ENCODE measurements at regions of chr19 and their contacts with region 1.

Region 1: DNA sequence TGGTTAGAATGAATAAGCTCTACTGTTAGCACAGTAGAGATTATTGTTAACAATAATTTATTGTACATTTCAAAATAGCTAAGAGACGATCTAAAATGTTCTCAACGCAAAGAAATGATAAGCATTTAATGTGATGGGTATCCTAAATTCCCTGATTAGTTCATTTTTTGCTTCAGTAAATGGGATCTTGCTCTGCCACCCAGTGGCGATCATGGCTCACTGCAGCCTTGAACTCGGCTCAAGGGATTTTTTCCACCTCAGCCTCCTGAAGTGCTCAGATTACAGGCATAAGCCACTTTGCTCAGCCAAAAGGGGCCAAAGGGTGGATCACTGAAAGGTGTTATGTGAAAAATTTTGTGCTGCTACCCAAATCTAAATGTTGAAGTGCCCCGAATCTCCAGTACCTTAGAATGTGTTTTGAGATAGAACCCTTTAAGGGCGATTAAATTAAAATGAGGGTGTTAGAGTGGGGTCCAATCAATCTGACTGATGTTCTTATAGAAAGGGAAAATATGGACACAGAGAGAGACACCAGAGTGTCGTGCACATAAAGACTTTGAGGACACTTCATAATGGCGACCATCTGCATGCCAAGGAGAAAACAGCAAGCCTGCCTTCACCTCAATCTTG is 31.5 kb upstream of the ZNF766 start:
- DNase-seq: peak; percentile 44
- ATAC-seq: peak; percentile 71
- H3K4me3 ChIP-seq: no peak overlapping the region
- H3K27ac ChIP-seq: no peak overlapping the region
- H3K4me1 ChIP-seq: no peaks in the 10 kb centered on the region
- H3K27me3 ChIP-seq: no peaks in the 10 kb centered on the region
- CTCF ChIP-seq: peak; percentile 57 to 82 (median 82); a peak in 5 of 6 replicates
- POLR2A ChIP-seq: no peak
- RAD21 ChIP-seq: peak; percentile 79

Region 2: GRCh38 chr19:51784922-51785690 is 452.8 kb before region 1 on chr19:
- CTCF ChIA-PET with region 1: no interaction called
- POLR2A ChIA-PET with region 1: no interaction called
- RAD21 ChIA-PET with region 1: no interaction called
- intact Hi-C with region 1: loop called (anchors 10 kb)
- DNase-seq: no peak
- ATAC-seq: no peak
- H3K4me3 ChIP-seq: no peak overlapping the region
- H3K27ac ChIP-seq: no peak overlapping the region
- H3K4me1 ChIP-seq: no peaks in the 10 kb centered on the region
- H3K27me3 ChIP-seq: no peaks in the 10 kb centered on the region
- CTCF ChIP-seq: no peak
- POLR2A ChIP-seq: no peak
- RAD21 ChIP-seq: no peak

Region 3: GRCh38 chr19:52120286-52120685 is 117.6 kb before region 1 on chr19:
- CTCF ChIA-PET with region 1: no interaction called
- POLR2A ChIA-PET with region 1: no interaction called
- RAD21 ChIA-PET with region 1: no interaction called
- intact Hi-C with region 1: no loop called
- DNase-seq: no peak
- ATAC-seq: no peak
- H3K4me3 ChIP-seq: no peak overlapping the region
- H3K27ac ChIP-seq: no peak overlapping the region
- H3K4me1 ChIP-seq: no peaks in the 10 kb centered on the region
- H3K27me3 ChIP-seq: no peaks in the 10 kb centered on the region
- CTCF ChIP-seq: no peak
- POLR2A ChIP-seq: no peak
- RAD21 ChIP-seq: no peak

Measured in HCT116 (cell line).